Right cardiac atrium (tissue), 5 donors: ENCODE measurements at regions of chr12 and their contacts with region 1.

Region 1: DNA sequence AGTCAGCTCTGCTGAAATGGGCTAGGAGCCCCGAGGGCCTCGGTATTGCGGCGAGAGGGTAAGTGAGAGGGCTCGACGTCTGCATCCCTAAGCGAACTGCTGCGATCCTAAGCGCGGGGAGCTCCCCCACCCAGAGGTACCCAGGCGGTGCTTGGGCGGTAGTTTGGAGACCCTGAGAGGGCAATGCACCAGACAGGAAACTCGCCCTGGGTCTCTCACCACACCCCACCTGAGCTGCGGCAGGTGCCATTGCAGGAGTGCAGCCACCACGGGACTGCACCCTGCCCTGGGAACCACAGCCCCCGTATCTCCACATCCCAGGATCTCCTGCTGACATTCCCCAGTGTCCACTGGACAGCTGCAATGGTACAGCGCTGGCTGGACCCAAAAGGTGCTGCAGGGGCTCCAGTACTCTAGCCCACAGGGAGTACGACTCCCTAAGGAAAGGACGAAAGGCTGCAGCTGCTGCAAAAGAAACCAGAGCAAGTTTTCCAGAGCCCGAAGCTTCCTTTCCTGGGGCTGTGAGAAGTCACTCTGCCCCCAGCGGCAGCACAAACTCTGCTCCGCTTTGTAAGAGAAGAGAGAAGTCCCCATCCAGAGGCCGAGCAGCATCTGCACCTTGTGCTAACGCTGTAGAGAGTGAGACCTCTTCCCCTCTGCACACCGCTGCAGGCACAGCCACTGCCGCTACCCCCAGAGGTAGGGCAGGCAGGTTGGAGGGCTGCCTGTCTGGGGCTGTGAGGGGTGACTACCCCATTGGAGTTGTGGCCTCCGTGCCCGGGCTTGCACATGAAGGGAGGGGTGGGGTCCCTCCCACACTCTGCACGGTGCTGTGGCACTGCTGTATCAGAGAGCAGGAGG is 31.1 kb upstream of the MON2 start:
- DNase-seq: peak; percentile 42 to 72 (median 66)
- ATAC-seq: peak; percentile 76 to 89
- H3K4me3 ChIP-seq: peak overlapping the region; percentile 41
- H3K27ac ChIP-seq: no peak overlapping the region
- H3K4me1 ChIP-seq: no peaks in the 10 kb centered on the region
- H3K27me3 ChIP-seq: no peaks in the 10 kb centered on the region

Region 2: DNA sequence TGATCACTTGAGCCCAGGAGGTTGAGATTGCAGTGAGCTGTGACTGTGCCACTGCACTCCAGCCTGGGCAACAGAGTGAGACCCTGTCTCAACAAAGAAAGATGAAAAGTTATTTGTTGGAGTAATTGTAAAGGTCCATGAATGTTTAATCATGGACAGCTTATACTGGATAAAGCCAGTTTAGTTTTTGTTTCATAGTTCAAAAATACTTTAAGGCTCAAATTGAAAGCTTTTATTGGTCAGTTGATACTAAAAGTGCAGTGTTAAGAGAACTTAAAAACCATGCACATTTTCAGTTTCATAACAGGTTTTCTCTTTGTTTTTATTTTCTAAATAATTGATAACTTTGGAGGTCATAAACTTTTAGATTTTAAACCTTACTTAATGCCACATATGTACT is 139.5 kb after region 1 on chr12:
- intact Hi-C with region 1: loop called in 1 of 4 experiments (anchors 10 kb)
- DNase-seq: no peak
- ATAC-seq: no peak
- H3K4me3 ChIP-seq: no peak overlapping the region
- H3K27ac ChIP-seq: no peak overlapping the region
- H3K4me1 ChIP-seq: no peaks in the 10 kb centered on the region
- H3K27me3 ChIP-seq: no peaks in the 10 kb centered on the region

Region 3: GRCh38 chr12:62799126-62799736 is 363.7 kb after region 1 on chr12:
- intact Hi-C with region 1: loop called in 3 of 4 experiments (anchors 2 to 10 kb)
- DNase-seq: peak in 1 of 3 donors; percentile 28
- ATAC-seq: peak; percentile 78 to 85
- H3K4me3 ChIP-seq: no peak overlapping the region
- H3K27ac ChIP-seq: no peak overlapping the region
- H3K4me1 ChIP-seq: no peaks in the 10 kb centered on the region
- H3K27me3 ChIP-seq: no peaks in the 10 kb centered on the region